Left ventricle myocardium inferior (tissue), 1 donor: ENCODE measurements at regions of chr11 and their contacts with region 1.

Region 1: DNA sequence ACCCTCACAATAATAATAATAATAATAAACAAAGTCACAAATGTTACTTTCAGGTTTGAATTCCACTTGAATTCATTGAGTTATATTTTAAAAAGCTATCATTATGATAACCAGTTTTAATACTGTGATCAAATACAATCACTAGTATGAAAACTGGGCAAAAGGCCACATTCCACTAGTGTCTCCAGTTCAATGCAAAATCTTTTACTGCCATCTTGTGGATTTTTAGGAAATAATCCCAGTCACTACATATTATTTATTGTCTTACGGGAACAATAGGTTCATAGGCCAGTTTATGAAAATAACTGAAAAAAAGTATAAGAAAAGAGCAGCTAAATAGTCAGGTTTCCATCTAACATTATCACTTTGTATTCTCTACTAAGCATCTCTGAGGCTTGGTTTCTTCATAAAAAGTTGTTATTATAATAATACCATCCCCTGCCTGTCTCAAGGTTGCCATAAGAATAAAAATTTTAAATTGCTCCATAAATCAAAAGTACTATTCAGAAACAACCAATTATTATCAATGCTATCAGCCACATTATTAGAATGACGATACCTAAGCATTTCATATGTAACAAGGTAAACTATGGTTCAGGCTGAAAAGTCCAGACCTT is 533.9 kb upstream of the CCDC90B start:
- DNase-seq: no peak
- H3K4me3 ChIP-seq: no peak overlapping the region
- H3K27ac ChIP-seq: no peak overlapping the region
- H3K4me1 ChIP-seq: no peaks in the 10 kb centered on the region
- H3K27me3 ChIP-seq: no peaks in the 10 kb centered on the region
- CTCF ChIP-seq: peak; percentile 62

Region 2: DNA sequence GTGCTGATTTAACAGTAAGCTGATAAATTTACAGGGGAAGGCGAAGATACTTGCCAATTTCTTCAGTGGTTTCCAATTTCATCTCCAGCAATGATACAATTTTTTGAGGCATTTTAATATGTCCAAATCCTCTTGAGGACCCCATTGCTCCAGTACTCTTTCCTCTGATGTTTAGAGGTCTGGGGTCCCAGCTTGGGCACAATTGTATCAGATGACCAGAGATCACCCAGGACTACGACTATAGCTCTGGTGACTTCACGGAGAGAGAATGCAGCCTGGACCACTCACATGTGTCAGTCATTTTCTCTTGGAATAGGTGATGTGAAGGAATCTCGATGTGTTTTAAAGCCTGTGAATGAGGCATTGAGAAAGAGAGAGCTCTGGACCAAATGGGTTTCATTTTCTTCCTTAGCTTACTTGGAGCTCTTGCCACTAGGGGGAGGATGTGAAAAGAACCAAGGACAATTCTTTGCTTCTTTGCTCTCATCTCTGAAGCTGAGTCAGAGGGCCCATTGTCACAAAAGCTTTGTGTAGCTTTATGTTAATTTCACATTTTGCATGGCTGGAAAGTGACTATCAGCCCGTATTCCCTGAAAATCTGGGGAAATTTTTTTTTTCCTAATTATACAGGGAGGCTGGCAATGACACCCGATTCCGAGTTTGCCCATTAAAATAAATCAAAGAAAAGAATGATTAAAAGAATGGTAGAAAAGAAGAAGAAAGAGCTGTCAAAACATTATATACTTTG is 527.2 kb before region 1 on chr11:
- intact Hi-C with region 1: loop called (anchors 10 kb)
- DNase-seq: no peak
- H3K4me3 ChIP-seq: peak overlapping the region; percentile 36
- H3K27ac ChIP-seq: no peak overlapping the region
- H3K4me1 ChIP-seq: no peaks in the 10 kb centered on the region
- H3K27me3 ChIP-seq: no peaks in the 10 kb centered on the region
- CTCF ChIP-seq: peak; percentile 73

Region 3: DNA sequence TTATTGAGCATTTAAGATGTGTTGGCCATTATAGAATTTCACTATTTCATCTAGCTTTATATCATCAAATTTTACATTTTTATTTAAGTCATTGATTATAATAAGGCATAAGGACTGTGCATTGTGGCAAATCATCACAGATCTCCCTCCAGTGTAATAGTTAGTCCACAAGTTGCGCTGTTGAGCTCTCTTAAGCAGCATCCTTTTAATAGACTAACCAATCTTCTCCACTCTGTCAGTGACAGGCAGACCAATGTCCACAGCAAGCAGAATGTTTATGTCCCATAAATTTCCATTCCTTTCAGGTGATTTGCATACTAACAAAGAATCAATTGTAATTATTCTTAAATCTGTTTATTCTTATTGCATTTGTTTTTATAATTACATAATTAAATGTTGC is 61.4 kb after region 1 on chr11:
- intact Hi-C with region 1: no loop called
- DNase-seq: no peak
- H3K4me3 ChIP-seq: no peak overlapping the region
- H3K27ac ChIP-seq: no peak overlapping the region
- H3K4me1 ChIP-seq: no peaks in the 10 kb centered on the region
- H3K27me3 ChIP-seq: no peaks in the 10 kb centered on the region
- CTCF ChIP-seq: no peak